Naive thymus-derived CD8-positive, alpha-beta T cell (primary cell): ENCODE measurements at regions of chr12 and their contacts with region 1.

Region 1: DNA sequence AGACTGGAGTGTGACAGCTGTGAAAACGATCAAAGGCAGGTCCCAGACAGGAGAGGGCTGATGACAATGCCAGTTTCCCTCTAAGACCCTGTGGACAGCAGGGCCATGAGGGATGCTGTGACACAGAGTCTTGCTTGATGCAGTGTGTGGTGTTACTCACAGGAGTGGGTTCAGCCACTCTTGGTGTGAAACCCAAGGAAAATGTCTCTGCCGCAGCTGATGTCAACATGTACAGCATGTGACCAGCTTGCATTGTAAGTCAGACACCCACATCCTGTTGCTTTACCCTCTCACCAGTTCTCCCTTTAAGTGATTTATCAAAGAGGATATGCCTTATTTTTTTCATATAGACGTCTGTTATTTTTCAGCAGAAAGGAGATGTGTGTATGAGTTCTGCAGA is 268.6 kb downstream of the BTG1 start:
- DNase-seq: peak; percentile 56 to 97 (median 89)
- ATAC-seq: peak; percentile 92
- H3K4me3 Mint-ChIP-seq: peak overlapping the region; percentile 72 to 90 (median 84)
- H3K27ac Mint-ChIP-seq: peak overlapping the region; percentile 96 to 100 (median 99)
- H3K4me1 Mint-ChIP-seq: peaks cover 38 to 76% (median 69%) of the 10 kb centered on the region in 4 donors
- H3K27me3 Mint-ChIP-seq: no peaks in the 10 kb centered on the region

Region 2: DNA sequence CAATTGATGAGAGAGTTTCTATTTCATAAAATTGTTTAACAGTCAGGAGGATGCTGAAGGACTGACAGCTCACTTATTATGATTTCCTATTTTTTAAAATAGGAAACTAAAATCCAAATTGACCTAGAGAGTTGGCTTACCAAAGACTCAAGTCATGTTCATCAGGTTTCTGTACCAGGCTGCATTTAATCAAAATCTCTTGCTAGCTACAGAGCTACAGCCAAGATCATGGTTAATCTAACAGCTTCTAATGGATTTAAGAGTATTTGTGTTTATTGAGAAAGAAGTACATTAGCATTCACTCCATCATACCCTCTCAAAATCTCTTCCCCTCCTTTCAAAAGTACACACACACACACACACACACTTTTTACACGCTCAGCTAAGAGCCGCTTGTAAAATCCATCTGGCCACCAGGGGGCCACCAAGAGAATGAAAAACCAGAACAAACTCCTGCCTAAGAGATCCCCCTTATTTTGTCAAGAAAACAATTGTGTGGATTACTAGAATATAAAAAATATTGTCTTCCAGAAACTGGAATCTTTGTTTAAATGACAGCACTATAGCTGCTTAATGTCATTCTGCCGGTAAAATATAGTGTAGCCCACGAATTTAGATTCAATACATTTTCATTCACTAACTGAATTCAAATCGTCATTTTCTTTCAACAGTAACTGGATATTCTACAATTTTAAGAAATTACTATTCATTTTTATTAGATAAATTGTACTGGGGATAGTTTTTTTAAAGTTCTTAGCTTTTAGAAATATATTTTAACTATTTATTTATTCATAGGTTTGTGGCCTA is 65.3 kb before region 1 on chr12:
- POLR2A ChIA-PET with region 1: interaction called, 29 read pairs
- DNase-seq: peak; percentile 55 to 87 (median 74)
- ATAC-seq: peak; percentile 84 to 90
- H3K4me3 Mint-ChIP-seq: peak overlapping the region in 8 of 10 donors; percentile 29 to 73 (median 56)
- H3K27ac Mint-ChIP-seq: peak overlapping the region; percentile 77 to 94 (median 89)
- H3K4me1 Mint-ChIP-seq: peaks cover 7 to 34% (median 30%) of the 10 kb centered on the region in 4 donors
- H3K27me3 Mint-ChIP-seq: no peaks in the 10 kb centered on the region

Region 3: GRCh38 chr12:91825999-91826398 is 51.0 kb before region 1 on chr12:
- POLR2A ChIA-PET with region 1: no interaction called
- DNase-seq: no peak
- ATAC-seq: no peak
- H3K4me3 Mint-ChIP-seq: no peak overlapping the region
- H3K27ac Mint-ChIP-seq: no peak overlapping the region
- H3K4me1 Mint-ChIP-seq: peaks cover 0 to 2% (median 1%) of the 10 kb centered on the region in 4 donors
- H3K27me3 Mint-ChIP-seq: no peaks in the 10 kb centered on the region

Region 4: GRCh38 chr12:91841822-91842221 is 35.2 kb before region 1 on chr12:
- POLR2A ChIA-PET with region 1: no interaction called
- DNase-seq: no peak
- ATAC-seq: no peak
- H3K4me3 Mint-ChIP-seq: no peak overlapping the region
- H3K27ac Mint-ChIP-seq: peak overlapping the region in 3 of 10 donors; percentile 20 to 44 (median 27)
- H3K4me1 Mint-ChIP-seq: peaks cover 0 to 20% (median 12%) of the 10 kb centered on the region in 4 donors
- H3K27me3 Mint-ChIP-seq: no peaks in the 10 kb centered on the region

Region 5: DNA sequence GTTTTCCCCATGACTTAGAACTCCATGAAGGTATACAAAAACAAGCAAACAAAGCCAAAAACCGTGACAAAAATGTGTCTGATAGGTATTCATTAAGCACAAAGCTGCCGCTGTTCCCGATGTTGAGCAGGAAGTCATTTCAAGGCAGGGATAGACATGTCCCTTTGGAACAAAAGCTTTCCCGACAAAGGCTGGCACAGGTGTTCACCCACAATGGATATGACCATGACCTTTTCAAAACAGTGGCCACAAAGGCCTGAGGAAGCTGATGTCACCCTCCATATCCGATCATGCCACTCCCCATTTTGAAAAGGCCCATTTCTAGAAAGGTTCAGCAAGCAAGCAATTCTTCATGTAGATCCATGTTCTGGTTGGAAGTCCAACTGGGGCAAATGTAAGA is 10.5 kb before region 1 on chr12:
- POLR2A ChIA-PET with region 1: interaction called, 19 read pairs
- DNase-seq: no peak
- ATAC-seq: no peak
- H3K4me3 Mint-ChIP-seq: no peak overlapping the region
- H3K27ac Mint-ChIP-seq: peak overlapping the region in 4 of 10 donors; percentile 33 to 67 (median 47)
- H3K4me1 Mint-ChIP-seq: peaks cover 30 to 70% (median 51%) of the 10 kb centered on the region in 4 donors
- H3K27me3 Mint-ChIP-seq: no peaks in the 10 kb centered on the region

Region 6: DNA sequence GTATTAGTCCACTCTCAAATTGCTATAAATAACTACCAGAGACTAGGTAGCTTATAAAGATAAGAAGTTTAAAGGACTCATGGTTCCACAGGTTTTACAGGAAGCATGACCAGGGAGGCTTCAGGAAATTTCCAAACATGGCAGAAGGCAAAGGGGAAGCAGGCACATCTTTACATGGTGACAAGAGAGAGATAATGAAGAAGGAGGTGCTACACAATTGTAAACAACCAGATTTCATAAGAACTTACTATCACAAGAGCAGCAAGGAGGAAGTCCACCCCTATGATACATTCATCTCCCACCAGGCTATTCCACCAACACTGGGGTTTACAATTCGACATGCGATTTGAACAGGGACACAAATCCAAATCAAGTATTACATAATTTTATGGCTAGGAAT is 10.9 kb after region 1 on chr12:
- POLR2A ChIA-PET with region 1: interaction called, 13 read pairs
- DNase-seq: no peak
- ATAC-seq: no peak
- H3K4me3 Mint-ChIP-seq: no peak overlapping the region
- H3K27ac Mint-ChIP-seq: peak overlapping the region in 3 of 10 donors; percentile 7 to 82 (median 31)
- H3K4me1 Mint-ChIP-seq: peaks cover 4 to 12% (median 9%) of the 10 kb centered on the region in 4 donors
- H3K27me3 Mint-ChIP-seq: no peaks in the 10 kb centered on the region

Region 7: DNA sequence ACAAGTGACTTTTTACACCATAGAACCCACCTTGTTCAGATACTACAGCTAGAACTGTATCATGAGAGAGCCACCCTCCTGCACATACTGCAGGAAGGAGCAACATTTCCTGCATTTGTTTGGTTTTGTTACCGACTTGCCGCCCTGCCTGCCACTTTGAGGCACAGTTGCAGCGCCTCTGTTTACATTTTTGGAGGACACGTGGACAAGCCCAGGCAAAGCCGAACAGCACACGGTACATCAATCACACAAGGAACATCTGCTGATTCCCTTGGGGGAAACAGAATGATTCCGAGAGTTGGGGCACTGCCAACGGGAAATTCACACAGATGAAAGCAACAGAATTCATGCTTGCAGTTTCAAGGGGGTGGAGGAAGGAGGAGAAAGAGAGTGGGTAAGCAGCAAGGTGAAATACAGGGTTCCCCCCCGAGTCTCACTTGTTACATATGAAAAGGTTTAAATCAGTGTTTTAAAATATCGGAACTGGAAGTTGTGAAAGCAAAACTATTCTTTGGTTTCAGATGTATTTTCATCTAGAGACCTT is 157.9 kb after region 1 on chr12:
- POLR2A ChIA-PET with region 1: interaction called, 27 read pairs
- DNase-seq: peak; percentile 32 to 77 (median 68)
- ATAC-seq: peak; percentile 51 to 52
- H3K4me3 Mint-ChIP-seq: peak overlapping the region; percentile 83 to 96 (median 92)
- H3K27ac Mint-ChIP-seq: peak overlapping the region; percentile 91 to 100 (median 99)
- H3K4me1 Mint-ChIP-seq: peaks cover 36 to 96% (median 92%) of the 10 kb centered on the region in 4 donors
- H3K27me3 Mint-ChIP-seq: no peaks in the 10 kb centered on the region

Region 8: DNA sequence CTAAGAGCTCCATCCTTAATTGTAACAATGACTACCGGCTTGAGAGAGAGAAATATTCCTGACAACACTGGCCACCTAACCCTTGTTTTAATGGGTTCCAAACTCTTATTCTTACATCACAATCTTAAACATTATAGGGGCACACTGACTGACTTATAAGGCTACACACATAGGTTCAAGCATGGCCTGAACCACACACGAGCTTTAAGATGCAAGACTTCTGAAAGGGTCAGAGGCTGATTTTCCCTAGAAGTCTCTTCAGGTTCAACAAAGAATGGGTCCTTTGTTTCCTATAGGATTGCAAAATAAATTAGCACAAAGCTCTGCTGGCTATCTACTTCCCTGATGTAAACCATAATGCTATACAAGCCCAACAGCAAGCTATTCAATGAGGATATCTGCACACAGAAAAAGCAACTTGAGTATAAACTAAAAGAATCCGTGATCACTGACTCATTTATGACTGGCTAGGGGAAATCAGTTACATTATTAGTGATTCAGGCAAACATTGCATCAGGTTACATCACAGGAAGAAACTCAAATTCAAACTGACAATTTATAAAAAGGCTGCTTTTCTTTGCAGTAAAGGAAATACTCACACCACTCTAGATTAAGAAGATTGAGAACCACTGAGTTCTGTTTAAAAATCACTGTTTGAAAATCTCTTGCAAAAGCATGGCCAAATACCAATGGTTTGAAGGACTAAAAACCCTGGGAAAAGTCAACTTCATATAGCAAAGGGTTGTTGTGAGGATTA is 260.1 kb after region 1 on chr12:
- POLR2A ChIA-PET with region 1: interaction called, 176 read pairs
- DNase-seq: no peak
- ATAC-seq: no peak
- H3K4me3 Mint-ChIP-seq: peak overlapping the region; percentile 89 to 100 (median 98)
- H3K27ac Mint-ChIP-seq: peak overlapping the region; percentile 89 to 100 (median 99)
- H3K4me1 Mint-ChIP-seq: peaks cover 37 to 74% (median 48%) of the 10 kb centered on the region in 4 donors
- H3K27me3 Mint-ChIP-seq: no peaks in the 10 kb centered on the region